Activated B cell treated with CpG ODN at 0.5 μM for 24 hours (primary cell): ENCODE measurements at regions of chr10 and their contacts with region 1.

Region 1: DNA sequence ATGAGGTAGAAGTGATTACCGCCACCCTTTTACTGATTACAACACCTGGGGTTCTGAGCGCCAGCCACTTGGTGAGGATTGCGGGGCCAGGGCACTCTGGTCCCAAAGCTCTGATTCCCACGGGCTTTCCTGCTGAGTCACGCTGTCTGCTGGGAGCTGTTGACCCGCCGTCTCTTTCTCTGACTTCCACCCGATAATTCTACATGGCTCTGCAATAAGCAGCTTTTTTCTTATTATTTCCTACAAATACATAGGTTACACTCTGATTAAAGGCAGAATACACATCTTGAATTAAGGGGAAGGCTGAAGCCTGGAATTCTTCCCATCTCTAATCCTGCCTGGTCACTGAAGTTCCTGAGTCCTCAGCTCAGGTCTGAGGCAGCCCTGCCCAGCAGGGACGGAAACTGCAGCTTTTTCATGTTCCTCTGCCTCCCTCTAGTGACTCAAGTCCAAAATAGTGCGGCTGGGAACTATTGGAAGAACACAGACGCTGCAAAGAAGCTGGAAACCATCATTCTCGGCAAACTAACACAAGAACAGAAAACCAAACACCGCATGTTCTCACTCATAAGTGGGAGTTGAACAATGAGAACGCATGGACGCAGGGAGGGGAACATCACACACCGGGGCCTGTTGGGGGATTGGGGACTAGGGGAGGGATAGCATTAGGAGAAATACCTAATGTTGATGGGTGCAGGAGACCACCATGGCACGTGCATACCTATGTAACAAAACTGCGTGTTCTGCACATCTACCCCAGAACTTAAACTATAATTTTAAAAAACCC is 178.3 kb downstream of the PRKCQ start:
- DNase-seq: no peak
- ATAC-seq: peak; percentile 93
- H3K4me3 Mint-ChIP-seq: peak overlapping the region; percentile 75
- H3K27ac Mint-ChIP-seq: no peak overlapping the region
- H3K4me1 Mint-ChIP-seq: peaks cover 33% of the 10 kb centered on the region
- H3K27me3 Mint-ChIP-seq: peaks cover 6% of the 10 kb centered on the region
- CTCF ChIP-seq: peak; percentile 57

Region 2: GRCh38 chr10:5910323-5911100 is 491.2 kb before region 1 on chr10:
- CTCF ChIA-PET with region 1: no interaction called
- POLR2A ChIA-PET with region 1: no interaction called
- intact Hi-C with region 1: loop called (anchors 10 kb)
- DNase-seq: no peak
- ATAC-seq: no peak
- H3K4me3 Mint-ChIP-seq: no peak overlapping the region
- H3K27ac Mint-ChIP-seq: no peak overlapping the region
- H3K4me1 Mint-ChIP-seq: peaks cover 6% of the 10 kb centered on the region
- H3K27me3 Mint-ChIP-seq: no peaks in the 10 kb centered on the region
- CTCF ChIP-seq: no peak

Region 3: GRCh38 chr10:6108603-6109443 is 292.9 kb before region 1 on chr10:
- CTCF ChIA-PET with region 1: interaction called, 43 read pairs
- POLR2A ChIA-PET with region 1: interaction called, 8 read pairs
- intact Hi-C with region 1: loop called (anchors 1 kb)
- DNase-seq: no peak
- ATAC-seq: peak; percentile 84
- H3K4me3 Mint-ChIP-seq: no peak overlapping the region
- H3K27ac Mint-ChIP-seq: peak overlapping the region; percentile 65
- H3K4me1 Mint-ChIP-seq: peaks cover 12% of the 10 kb centered on the region
- H3K27me3 Mint-ChIP-seq: no peaks in the 10 kb centered on the region
- CTCF ChIP-seq: peak; percentile 88

Region 4: GRCh38 chr10:6151087-6151977 is 250.4 kb before region 1 on chr10:
- CTCF ChIA-PET with region 1: interaction called, 11 read pairs
- POLR2A ChIA-PET with region 1: interaction called, 7 read pairs
- intact Hi-C with region 1: no loop called
- DNase-seq: peak; percentile 53
- ATAC-seq: peak; percentile 83
- H3K4me3 Mint-ChIP-seq: peak overlapping the region; percentile 79
- H3K27ac Mint-ChIP-seq: peak overlapping the region; percentile 85
- H3K4me1 Mint-ChIP-seq: peaks cover 45% of the 10 kb centered on the region
- H3K27me3 Mint-ChIP-seq: no peaks in the 10 kb centered on the region
- CTCF ChIP-seq: no peak

Region 5: GRCh38 chr10:6247041-6247712 is 154.6 kb before region 1 on chr10:
- CTCF ChIA-PET with region 1: interaction called, 11 read pairs
- POLR2A ChIA-PET with region 1: no interaction called
- intact Hi-C with region 1: no loop called
- DNase-seq: no peak
- ATAC-seq: no peak
- H3K4me3 Mint-ChIP-seq: no peak overlapping the region
- H3K27ac Mint-ChIP-seq: no peak overlapping the region
- H3K4me1 Mint-ChIP-seq: peaks cover 3% of the 10 kb centered on the region
- H3K27me3 Mint-ChIP-seq: no peaks in the 10 kb centered on the region
- CTCF ChIP-seq: no peak

Region 6: GRCh38 chr10:6320320-6321010 is 81.3 kb before region 1 on chr10:
- CTCF ChIA-PET with region 1: interaction called, 17 read pairs
- POLR2A ChIA-PET with region 1: interaction called, 3 read pairs
- intact Hi-C with region 1: no loop called
- DNase-seq: peak; percentile 24
- ATAC-seq: peak; percentile 92
- H3K4me3 Mint-ChIP-seq: peak overlapping the region; percentile 57
- H3K27ac Mint-ChIP-seq: no peak overlapping the region
- H3K4me1 Mint-ChIP-seq: peaks cover 23% of the 10 kb centered on the region
- H3K27me3 Mint-ChIP-seq: no peaks in the 10 kb centered on the region
- CTCF ChIP-seq: no peak

Region 7: GRCh38 chr10:6382081-6382480 is 19.7 kb before region 1 on chr10:
- CTCF ChIA-PET with region 1: interaction called, 13 read pairs
- POLR2A ChIA-PET with region 1: interaction called, 18 read pairs
- intact Hi-C with region 1: no loop called
- DNase-seq: no peak
- ATAC-seq: peak; percentile 90
- H3K4me3 Mint-ChIP-seq: peak overlapping the region; percentile 72
- H3K27ac Mint-ChIP-seq: peak overlapping the region; percentile 82
- H3K4me1 Mint-ChIP-seq: peaks cover 25% of the 10 kb centered on the region
- H3K27me3 Mint-ChIP-seq: no peaks in the 10 kb centered on the region
- CTCF ChIP-seq: no peak